ENCODE measurements at regions of chr4 and their contacts with region 1.

Region 1: DNA sequence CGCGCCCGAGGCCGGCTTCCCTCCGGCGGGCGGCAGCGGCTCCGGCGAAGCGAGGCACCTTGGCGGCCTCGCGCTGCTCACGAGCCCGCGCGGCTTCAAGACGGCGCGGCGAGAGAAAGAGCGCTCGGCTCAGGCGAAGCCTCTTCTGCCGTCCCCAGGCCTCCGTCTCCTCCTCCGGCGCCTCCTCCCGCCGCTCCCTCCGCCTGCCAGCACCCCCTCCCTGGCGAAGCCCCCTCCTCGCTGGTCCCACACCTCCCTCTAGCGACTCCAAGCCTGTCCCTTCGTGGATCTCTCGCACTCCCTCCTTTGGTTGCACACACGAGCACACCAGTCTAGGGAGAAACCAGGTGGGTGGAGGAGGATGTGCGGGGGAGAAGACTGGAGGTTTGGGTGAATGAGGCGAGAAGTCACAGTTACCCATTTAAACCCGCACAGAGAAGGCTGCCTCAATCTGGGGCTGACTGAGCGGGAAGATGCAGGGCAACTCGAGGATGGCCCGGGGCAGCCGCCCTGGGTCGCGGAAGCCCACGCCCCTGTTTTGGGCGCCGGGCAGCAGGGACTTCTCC is at the start of gene CAMK2D:
- DNase-seq: peak; percentile 79
- H3K4me3 Mint-ChIP-seq: peak within 1 kb of the TSS; percentile 100
- H3K27ac Mint-ChIP-seq: peak within 1 kb of the TSS; percentile 100
- H3K4me1 Mint-ChIP-seq: peaks cover 44% of the 10 kb centered on the region
- H3K27me3 Mint-ChIP-seq: no peaks in the 10 kb centered on the region
- total RNA-seq, gene CAMK2D: 67.7 and 73.5 TPM in 2 replicates

Region 2: GRCh38 chr4:113355550-113356371 is 405.9 kb before region 1 on chr4:
- intact Hi-C with region 1: loop called (anchors 1 kb)
- DNase-seq: peak; percentile 71
- H3K4me3 Mint-ChIP-seq: peak overlapping the region; percentile 30
- H3K27ac Mint-ChIP-seq: peak overlapping the region; percentile 79
- H3K4me1 Mint-ChIP-seq: peaks cover 37% of the 10 kb centered on the region
- H3K27me3 Mint-ChIP-seq: peaks cover 25% of the 10 kb centered on the region

Region 3: GRCh38 chr4:113474017-113474416 is 287.7 kb before region 1 on chr4:
- intact Hi-C with region 1: loop called (anchors 1 kb)
- DNase-seq: no peak
- H3K4me3 Mint-ChIP-seq: no peak overlapping the region
- H3K27ac Mint-ChIP-seq: peak overlapping the region; percentile 82
- H3K4me1 Mint-ChIP-seq: peaks cover 39% of the 10 kb centered on the region
- H3K27me3 Mint-ChIP-seq: no peaks in the 10 kb centered on the region

Region 4: DNA sequence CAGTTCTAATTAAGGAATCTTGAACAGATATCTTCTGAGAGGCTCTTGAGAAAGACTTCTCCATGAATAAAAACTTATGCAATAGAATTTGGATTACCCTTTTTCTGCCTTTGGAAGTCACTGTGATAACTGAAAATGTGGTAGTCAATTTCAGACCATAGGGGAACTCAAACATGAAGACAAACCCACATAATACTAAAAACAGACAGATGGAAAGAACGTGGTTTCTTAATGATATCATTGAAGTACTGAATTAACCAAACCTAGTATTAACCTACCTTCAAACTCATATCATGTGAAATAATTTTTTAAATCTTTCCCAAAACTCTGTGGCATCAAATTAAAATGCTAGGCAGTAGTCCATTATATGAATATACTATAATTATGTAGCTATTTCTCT is 153.7 kb before region 1 on chr4:
- intact Hi-C with region 1: loop called (anchors 1 kb)
- DNase-seq: no peak
- H3K4me3 Mint-ChIP-seq: no peak overlapping the region
- H3K27ac Mint-ChIP-seq: peak overlapping the region; percentile 36
- H3K4me1 Mint-ChIP-seq: peaks cover 34% of the 10 kb centered on the region
- H3K27me3 Mint-ChIP-seq: no peaks in the 10 kb centered on the region

Region 5: GRCh38 chr4:113823291-113823659 is 61.6 kb after region 1 on chr4:
- intact Hi-C with region 1: loop called (anchors 1 kb)
- DNase-seq: no peak
- H3K4me3 Mint-ChIP-seq: no peak overlapping the region
- H3K27ac Mint-ChIP-seq: no peak overlapping the region
- H3K4me1 Mint-ChIP-seq: peaks cover 38% of the 10 kb centered on the region
- H3K27me3 Mint-ChIP-seq: no peaks in the 10 kb centered on the region

Region 6: DNA sequence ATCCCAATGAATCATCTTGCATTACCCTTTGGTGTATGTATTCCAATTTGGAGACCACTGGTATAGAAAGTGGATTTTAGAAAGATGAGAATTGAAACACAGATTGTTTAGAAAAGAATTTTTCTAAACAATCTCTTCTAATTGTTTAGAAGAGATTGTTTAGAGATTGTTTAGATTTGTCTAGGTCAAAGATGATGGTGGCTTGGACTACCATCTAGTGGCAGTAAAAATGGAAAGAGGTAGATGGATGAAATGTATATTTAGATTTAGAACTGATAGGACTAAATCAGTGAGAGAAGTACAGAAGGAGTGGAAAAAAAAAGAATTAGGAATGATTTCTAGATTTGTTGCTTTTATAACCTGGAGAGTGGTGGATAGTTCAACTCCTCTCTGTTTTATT is 147.1 kb after region 1 on chr4:
- intact Hi-C with region 1: loop called (anchors 2 kb)
- DNase-seq: no peak
- H3K4me3 Mint-ChIP-seq: no peak overlapping the region
- H3K27ac Mint-ChIP-seq: no peak overlapping the region
- H3K4me1 Mint-ChIP-seq: no peaks in the 10 kb centered on the region
- H3K27me3 Mint-ChIP-seq: peaks cover 2% of the 10 kb centered on the region

Measured in activated T-helper 1 cell treated with anti-CD3 and anti-CD28 coated beads, Interleukin-12 subunit alpha, Interleukin-12 subunit beta, Interleukin-2, Interleukin-4 antibody, amounts not matched to agents 30 ng/mL and 10 ng/mL and 1 ng/mL, durations not matched to agents 14 hours and 24 hours and 36 hours (primary cell).